Activated CD4-positive, alpha-beta T cell treated with anti-CD3 and anti-CD28 coated beads, Interleukin-2, amount 10 ng/mL, durations not matched to agents 24 days and 14 days (primary cell): ENCODE measurements at regions of chr11 and their contacts with region 1.

Region 1: DNA sequence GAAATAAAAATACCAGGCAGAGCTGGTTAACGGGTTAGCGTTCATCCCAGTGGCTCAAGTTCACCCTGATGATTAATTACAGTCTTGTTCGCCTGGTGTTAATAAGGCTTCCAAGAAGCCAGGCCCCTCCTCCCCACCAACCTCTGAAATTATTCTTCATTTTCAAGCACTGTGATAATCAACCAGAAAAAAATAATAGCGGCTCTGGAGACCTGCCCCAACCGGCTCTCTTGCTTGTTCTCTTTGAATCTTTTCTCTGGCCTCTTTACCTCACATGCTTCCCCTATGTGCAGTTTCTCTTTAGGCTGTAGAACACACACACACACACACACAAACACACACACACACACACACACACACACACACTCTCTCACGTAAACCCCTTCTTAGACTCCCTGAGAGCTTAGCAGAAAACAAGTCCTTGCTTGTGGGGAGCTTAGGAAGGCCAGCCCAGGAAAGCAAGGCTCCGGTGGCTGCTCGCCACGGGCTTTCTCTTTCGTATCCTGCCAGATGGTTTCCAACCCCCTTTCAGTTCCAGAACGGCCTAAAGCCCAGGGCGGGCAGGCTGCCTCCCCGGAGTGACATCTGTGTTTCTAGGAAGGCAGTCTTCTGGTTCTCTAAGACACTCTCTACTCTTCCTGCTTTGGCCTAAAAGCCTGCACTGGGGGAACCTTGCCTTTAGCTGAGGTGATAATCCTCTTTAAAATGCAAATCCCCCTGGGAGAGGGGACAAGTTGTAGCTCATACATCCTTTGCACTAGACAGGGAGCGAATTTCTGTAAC is 106.4 kb upstream of the SESN3 start:
- DNase-seq: peak; percentile 90
- H3K4me3 Mint-ChIP-seq: no peak overlapping the region
- H3K27ac Mint-ChIP-seq: no peak overlapping the region
- H3K4me1 Mint-ChIP-seq: peaks cover 10% of the 10 kb centered on the region
- H3K27me3 Mint-ChIP-seq: peaks cover 2% of the 10 kb centered on the region

Region 2: GRCh38 chr11:95035316-95035715 is 302.1 kb before region 1 on chr11:
- intact Hi-C with region 1: no loop called
- DNase-seq: peak; percentile 43
- H3K4me3 Mint-ChIP-seq: no peak overlapping the region
- H3K27ac Mint-ChIP-seq: no peak overlapping the region
- H3K4me1 Mint-ChIP-seq: no peaks in the 10 kb centered on the region
- H3K27me3 Mint-ChIP-seq: peaks cover 28% of the 10 kb centered on the region

Region 3: GRCh38 chr11:95322546-95322945 is 14.8 kb before region 1 on chr11:
- intact Hi-C with region 1: loop called (anchors 2 kb)
- DNase-seq: no peak
- H3K4me3 Mint-ChIP-seq: no peak overlapping the region
- H3K27ac Mint-ChIP-seq: no peak overlapping the region
- H3K4me1 Mint-ChIP-seq: peaks cover 12% of the 10 kb centered on the region
- H3K27me3 Mint-ChIP-seq: peaks cover 4% of the 10 kb centered on the region